ENCODE measurements at regions of chr12 and their contacts with region 1.

Region 1: GRCh38 chr12:120640840-120641833 is 711 bp downstream of the CABP1 start:
- DNase-seq: peak; percentile 43
- H3K4me3 ChIP-seq: peak overlapping the region; percentile 66
- H3K27ac ChIP-seq: no peak overlapping the region
- H3K4me1 ChIP-seq: peaks cover 15% of the 10 kb centered on the region
- H3K27me3 ChIP-seq: peaks cover 66% of the 10 kb centered on the region
- CTCF ChIP-seq: no peak

Region 2: GRCh38 chr12:120720234-120720986 is 79.3 kb after region 1 on chr12:
- intact Hi-C with region 1: no loop called
- DNase-seq: no peak
- H3K4me3 ChIP-seq: no peak overlapping the region
- H3K27ac ChIP-seq: peak overlapping the region; percentile 55
- H3K4me1 ChIP-seq: peaks cover 32% of the 10 kb centered on the region
- H3K27me3 ChIP-seq: no peaks in the 10 kb centered on the region
- CTCF ChIP-seq: no peak

Region 3: DNA sequence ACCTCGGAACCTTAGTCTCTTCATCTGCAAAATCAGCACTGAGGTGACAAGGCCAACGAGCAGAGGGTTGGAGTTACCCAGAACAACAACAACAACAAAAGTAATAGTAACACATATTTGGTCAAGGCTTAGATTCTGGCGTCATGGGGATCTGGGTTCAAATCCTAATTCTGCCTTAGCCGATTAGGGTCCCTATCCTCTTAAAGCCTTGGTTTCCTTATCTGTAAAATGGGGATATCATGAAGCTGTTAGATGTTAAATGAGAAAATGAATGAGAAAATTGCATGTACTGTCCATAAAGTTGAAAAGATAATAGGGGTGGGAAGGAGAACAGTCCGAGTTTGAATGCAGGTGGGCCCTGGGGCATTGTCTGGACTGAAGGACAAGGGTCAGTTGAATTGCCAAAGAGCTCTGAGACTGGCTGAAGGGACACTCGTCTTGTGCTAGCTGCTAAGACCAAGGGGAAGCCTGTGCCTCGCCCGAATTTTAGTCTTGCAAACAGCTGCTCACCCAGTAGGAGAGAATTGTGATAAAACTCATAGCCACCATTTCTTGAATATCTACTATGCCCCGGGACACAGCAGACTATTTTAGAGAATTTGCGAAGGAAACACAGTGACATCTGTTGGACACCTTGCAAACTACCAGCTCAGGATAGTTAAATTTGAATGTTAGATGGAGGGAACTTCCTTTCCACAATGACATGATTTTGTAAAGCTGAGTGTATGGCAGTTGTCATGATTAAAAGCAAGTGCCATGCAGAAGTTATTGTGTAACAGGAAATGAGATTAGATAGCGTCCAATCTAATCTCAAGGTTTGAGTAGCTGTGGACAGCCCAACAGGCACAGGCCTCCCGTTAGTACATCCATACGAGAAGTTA is 330.4 kb after region 1 on chr12:
- intact Hi-C with region 1: loop called (anchors 10 kb)
- DNase-seq: no peak
- H3K4me3 ChIP-seq: no peak overlapping the region
- H3K27ac ChIP-seq: no peak overlapping the region
- H3K4me1 ChIP-seq: no peaks in the 10 kb centered on the region
- H3K27me3 ChIP-seq: no peaks in the 10 kb centered on the region
- CTCF ChIP-seq: peak; percentile 83